Activated naive CD8-positive, alpha-beta T cell treated with anti-CD3 and anti-CD28 coated beads, Interleukin-2, amount 10 ng/mL, durations not matched to agents 7 days and 5 days (primary cell): ENCODE measurements at regions of chr19 and their contacts with region 1.

Region 1: DNA sequence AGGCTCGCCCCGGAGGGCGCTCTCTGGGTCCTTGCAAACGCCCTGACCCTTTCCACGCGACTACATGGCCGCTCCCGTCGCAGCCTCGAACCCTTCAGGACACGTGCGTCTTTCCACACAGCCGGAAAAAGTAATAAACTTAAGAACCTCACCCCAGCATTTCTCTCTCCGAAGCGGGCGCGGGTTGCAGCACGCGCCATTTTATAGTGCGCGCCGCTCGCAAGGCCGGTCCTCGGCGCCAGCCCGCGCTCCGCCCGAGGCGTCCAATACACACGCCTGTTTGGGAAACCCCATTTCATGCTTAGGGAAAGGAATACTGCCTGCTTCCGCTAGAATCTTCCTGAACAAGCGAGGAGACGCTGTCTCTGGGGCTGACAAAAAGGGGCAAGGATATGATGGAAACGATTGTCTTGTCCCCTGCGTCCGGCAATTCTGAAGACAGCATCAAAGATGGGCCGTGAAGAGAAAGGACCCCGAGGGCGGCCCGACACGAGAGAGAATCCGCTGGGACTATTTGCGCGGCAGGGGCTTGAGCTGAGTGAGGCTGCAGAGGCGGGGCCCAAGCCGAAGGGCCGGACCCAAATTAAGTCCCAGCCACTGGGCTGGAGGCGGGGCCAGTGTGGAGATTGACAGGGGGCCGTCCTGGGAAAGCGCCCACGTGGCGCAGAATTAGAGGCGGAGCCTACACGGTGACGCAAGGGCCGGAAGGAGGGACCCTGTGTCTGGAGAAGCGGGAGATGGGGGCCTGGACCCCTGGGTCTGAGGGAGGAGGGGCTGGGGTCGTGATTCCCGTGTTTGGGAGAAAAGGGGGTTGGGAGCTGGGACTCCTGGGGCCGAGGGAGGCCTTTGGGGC is 14.4 kb downstream of the ACP4 start:
- DNase-seq: peak; percentile 97
- ATAC-seq: peak; percentile 98
- H3K4me3 Mint-ChIP-seq: peak overlapping the region; percentile 99
- H3K27ac Mint-ChIP-seq: peak overlapping the region; percentile 94
- H3K4me1 Mint-ChIP-seq: peaks cover 25% of the 10 kb centered on the region
- H3K27me3 Mint-ChIP-seq: peaks cover 6% of the 10 kb centered on the region

Region 2: DNA sequence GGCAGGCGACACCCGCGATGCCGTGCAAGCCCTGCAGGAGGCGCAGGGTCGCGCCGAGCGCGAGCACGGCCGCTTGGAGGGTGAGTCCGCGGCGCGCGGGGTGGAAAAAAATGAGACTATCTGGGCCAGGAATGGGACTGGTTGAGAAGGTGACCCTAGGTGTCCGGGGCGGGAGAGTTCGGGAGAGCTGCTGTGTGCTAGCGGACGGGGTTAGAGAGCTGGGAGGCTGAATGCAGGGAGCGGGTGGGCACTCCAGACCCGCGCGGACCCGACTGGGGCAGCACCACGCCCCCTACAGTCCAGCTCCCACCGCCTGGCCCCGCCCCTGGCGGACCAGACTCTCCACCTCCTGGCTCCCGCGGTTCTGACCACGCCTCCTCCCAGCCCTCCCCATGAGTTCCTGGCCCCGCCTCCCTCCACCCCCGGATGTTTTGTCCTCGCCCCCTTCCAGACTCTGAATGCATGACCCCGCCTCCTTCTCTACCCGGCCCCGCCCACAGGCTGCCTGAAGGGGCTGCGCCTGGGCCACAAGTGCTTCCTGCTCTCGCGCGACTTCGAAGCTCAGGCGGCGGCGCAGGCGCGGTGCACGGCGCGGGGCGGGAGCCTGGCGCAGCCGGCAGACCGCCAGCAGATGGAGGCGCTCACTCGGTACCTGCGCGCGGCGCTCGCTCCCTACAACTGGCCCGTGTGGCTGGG is 80.0 kb before region 1 on chr19:
- POLR2A ChIA-PET with region 1: interaction called, 18 read pairs
- DNase-seq: peak; percentile 98
- ATAC-seq: peak; percentile 84
- H3K4me3 Mint-ChIP-seq: peak overlapping the region; percentile 96
- H3K27ac Mint-ChIP-seq: peak overlapping the region; percentile 94
- H3K4me1 Mint-ChIP-seq: peaks cover 27% of the 10 kb centered on the region
- H3K27me3 Mint-ChIP-seq: peaks cover 32% of the 10 kb centered on the region

Region 3: GRCh38 chr19:50794439-50795237 is 10.0 kb before region 1 on chr19:
- POLR2A ChIA-PET with region 1: interaction called, 12 read pairs
- DNase-seq: no peak
- ATAC-seq: peak; percentile 9
- H3K4me3 Mint-ChIP-seq: no peak overlapping the region
- H3K27ac Mint-ChIP-seq: peak overlapping the region; percentile 25
- H3K4me1 Mint-ChIP-seq: peaks cover 2% of the 10 kb centered on the region
- H3K27me3 Mint-ChIP-seq: no peaks in the 10 kb centered on the region

Region 4: GRCh38 chr19:50817941-50818858 is 13.6 kb after region 1 on chr19:
- POLR2A ChIA-PET with region 1: interaction called, 22 read pairs
- DNase-seq: peak; percentile 75
- ATAC-seq: peak; percentile 54
- H3K4me3 Mint-ChIP-seq: peak overlapping the region; percentile 76
- H3K27ac Mint-ChIP-seq: peak overlapping the region; percentile 35
- H3K4me1 Mint-ChIP-seq: peaks cover 21% of the 10 kb centered on the region
- H3K27me3 Mint-ChIP-seq: peaks cover 47% of the 10 kb centered on the region